ENCODE measurements at regions of chr10 and their contacts with region 1.

Region 1: DNA sequence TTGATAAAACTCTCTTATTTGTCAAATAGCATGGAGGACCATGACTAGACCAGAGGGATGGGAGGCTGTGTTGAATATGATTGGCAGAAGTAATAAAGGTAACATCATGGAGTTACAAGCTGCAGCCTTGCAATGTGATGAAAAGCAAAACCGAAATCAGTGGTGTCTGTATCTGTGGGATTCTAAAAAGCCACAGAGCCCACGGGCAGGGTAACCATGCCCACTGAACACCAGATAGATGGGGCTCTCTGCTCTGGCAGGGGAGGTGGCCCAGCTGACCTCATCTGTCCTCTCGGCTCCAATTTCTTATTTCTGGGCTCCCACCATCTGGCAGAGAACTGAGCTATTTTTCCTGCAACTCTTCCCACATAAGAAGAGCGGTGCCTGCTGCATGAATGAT is 1072.2 kb downstream of the GATA3 start:
- DNase-seq: no peak
- H3K4me3 Mint-ChIP-seq: no peak overlapping the region
- H3K27ac Mint-ChIP-seq: no peak overlapping the region
- H3K4me1 Mint-ChIP-seq: no peaks in the 10 kb centered on the region
- H3K27me3 Mint-ChIP-seq: no peaks in the 10 kb centered on the region
- CTCF ChIP-seq: no peak

Region 2: GRCh38 chr10:9178133-9178532 is 51.4 kb after region 1 on chr10:
- CTCF ChIA-PET with region 1: no interaction called
- POLR2A ChIA-PET with region 1: no interaction called
- intact Hi-C with region 1: loop called (anchors 2 kb)
- DNase-seq: no peak
- H3K4me3 Mint-ChIP-seq: no peak overlapping the region
- H3K27ac Mint-ChIP-seq: no peak overlapping the region
- H3K4me1 Mint-ChIP-seq: no peaks in the 10 kb centered on the region
- H3K27me3 Mint-ChIP-seq: no peaks in the 10 kb centered on the region
- CTCF ChIP-seq: no peak

Region 3: DNA sequence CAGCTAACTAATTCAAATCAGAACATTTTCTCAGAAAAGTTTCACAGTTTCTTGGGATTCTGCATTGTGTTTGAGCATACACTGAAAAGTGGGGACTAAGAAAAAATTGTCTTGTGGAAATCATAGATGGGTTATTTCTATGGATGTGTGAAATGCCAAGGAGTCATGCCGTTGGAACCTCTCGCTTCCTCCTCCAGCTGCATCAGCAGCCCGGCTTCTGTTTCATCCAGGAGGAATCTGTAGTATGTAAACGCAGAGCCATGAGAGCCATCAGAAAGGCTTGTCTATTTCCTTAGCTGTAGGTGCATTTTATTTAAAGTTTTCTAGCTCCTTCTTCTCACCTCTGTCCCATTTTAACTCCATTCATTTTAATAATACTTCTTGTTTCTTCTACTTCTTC is 71.9 kb after region 1 on chr10:
- CTCF ChIA-PET with region 1: no interaction called
- POLR2A ChIA-PET with region 1: no interaction called
- intact Hi-C with region 1: no loop called
- DNase-seq: no peak
- H3K4me3 Mint-ChIP-seq: no peak overlapping the region
- H3K27ac Mint-ChIP-seq: peak overlapping the region; percentile 2
- H3K4me1 Mint-ChIP-seq: no peaks in the 10 kb centered on the region
- H3K27me3 Mint-ChIP-seq: no peaks in the 10 kb centered on the region
- CTCF ChIP-seq: no peak

Region 4: GRCh38 chr10:9289811-9290210 is 163.1 kb after region 1 on chr10:
- CTCF ChIA-PET with region 1: no interaction called
- POLR2A ChIA-PET with region 1: no interaction called
- intact Hi-C with region 1: no loop called
- DNase-seq: peak; percentile 42
- H3K4me3 Mint-ChIP-seq: no peak overlapping the region
- H3K27ac Mint-ChIP-seq: no peak overlapping the region
- H3K4me1 Mint-ChIP-seq: no peaks in the 10 kb centered on the region
- H3K27me3 Mint-ChIP-seq: no peaks in the 10 kb centered on the region
- CTCF ChIP-seq: no peak